ENCODE measurements at regions of chr1 and their contacts with region 1.

Region 1: DNA sequence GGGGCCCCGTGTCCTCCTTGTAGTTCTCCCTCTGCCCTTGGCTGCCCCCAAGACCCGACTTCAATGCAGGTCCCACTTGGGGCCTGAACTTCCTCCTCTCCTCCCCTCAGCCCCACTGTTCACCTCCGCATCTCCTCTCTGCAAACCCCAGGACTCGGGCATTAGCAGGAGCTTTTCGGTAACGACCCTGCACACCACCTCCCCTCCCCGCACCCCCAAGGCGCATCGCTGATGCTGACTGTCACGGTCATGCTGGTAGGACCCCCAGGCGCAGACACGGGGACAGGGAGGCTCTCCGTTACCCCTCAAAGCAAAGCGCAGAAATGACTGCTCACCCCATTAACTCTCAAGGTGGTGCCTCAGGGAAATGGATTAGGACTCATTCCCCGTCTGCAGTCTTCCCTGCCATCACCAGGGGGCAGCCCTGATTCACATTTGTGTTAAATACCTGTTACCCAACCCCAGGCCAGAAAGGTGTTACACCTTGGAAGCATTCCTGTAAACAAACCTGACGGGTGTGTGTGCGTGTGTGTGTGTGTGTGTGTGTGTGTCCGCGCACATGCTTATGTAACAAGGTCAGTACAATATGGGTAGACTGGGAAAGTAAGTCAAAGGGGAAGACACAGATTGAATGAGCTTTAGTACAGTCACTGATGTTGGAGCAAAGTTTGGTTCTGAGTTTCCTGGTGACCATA is 6.4 kb upstream of the GUCA2B start:
- DNase-seq: peak; percentile 79
- ATAC-seq: peak; percentile 94
- H3K4me3 ChIP-seq: no peak overlapping the region
- H3K27ac ChIP-seq: no peak overlapping the region
- H3K4me1 ChIP-seq: peaks cover 0 to 8% of the 10 kb centered on the region in 2 experiments; a peak in 1 of 4 replicates
- H3K27me3 ChIP-seq: no peaks in the 10 kb centered on the region
- CTCF ChIP-seq: peak; percentile 83 to 89 (median 83)
- POLR2A ChIP-seq: no peak
- RAD21 ChIP-seq: peak; percentile 95

Region 2: GRCh38 chr1:42730988-42731387 is 584.2 kb after region 1 on chr1:
- CTCF ChIA-PET with region 1: interaction called, 3 read pairs
- POLR2A ChIA-PET with region 1: no interaction called
- RAD21 ChIA-PET with region 1: no interaction called
- intact Hi-C with region 1: loop called (anchors 2 kb)
- DNase-seq: peak; percentile 64
- ATAC-seq: peak; percentile 84
- H3K4me3 ChIP-seq: no peak overlapping the region
- H3K27ac ChIP-seq: no peak overlapping the region
- H3K4me1 ChIP-seq: peaks cover 4 to 6% of the 10 kb centered on the region in 2 experiments
- H3K27me3 ChIP-seq: no peaks in the 10 kb centered on the region
- CTCF ChIP-seq: peak; percentile 53 to 85 (median 58)
- POLR2A ChIP-seq: no peak
- RAD21 ChIP-seq: peak; percentile 94